IMR-90 (cell line): ENCODE measurements at regions of chr5 and their contacts with region 1.

Region 1: DNA sequence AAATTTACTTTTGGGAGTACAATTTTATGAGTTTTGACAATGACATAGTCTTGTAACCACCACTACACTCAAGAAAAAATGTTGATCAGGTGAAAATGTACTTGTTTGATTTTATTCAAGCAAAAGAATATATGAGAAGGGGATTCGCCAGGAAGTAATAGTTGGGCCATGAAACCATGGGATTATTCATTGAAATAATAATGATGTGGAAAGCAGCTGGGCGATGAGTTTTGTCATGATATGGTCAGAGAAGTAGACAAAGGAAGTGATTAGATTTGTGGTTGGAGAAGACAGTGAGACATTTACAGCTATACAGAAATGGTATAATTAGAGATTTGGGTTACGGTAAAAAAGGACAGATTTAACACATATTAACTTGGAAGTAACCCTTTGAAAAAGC is 11.2 kb downstream of the HMGCR start:
- DNase-seq: peak; percentile 55
- ATAC-seq: no peak
- H3K4me3 ChIP-seq: no peak overlapping the region
- H3K27ac ChIP-seq: no peak overlapping the region
- H3K4me1 ChIP-seq: no peaks in the 10 kb centered on the region
- H3K27me3 ChIP-seq: no peaks in the 10 kb centered on the region
- CTCF ChIP-seq: no peak
- POLR2A ChIP-seq: no peak
- RAD21 ChIP-seq: no peak

Region 2: GRCh38 chr5:75381456-75381855 is 33.2 kb after region 1 on chr5:
- CTCF ChIA-PET with region 1: no interaction called
- POLR2A ChIA-PET with region 1: no interaction called
- dilution Hi-C with region 1: no loop called
- in situ Hi-C with region 1: no loop called
- intact Hi-C with region 1: loop called (anchors 2 kb)
- DNase-seq: no peak
- ATAC-seq: no peak
- H3K4me3 ChIP-seq: no peak overlapping the region
- H3K27ac ChIP-seq: no peak overlapping the region
- H3K4me1 ChIP-seq: no peaks in the 10 kb centered on the region
- H3K27me3 ChIP-seq: no peaks in the 10 kb centered on the region
- CTCF ChIP-seq: no peak
- POLR2A ChIP-seq: no peak
- RAD21 ChIP-seq: no peak